Naive thymus-derived CD4-positive, alpha-beta T cell (primary cell): ENCODE measurements at regions of chr17 and their contacts with region 1.

Region 1: GRCh38 chr17:64145757-64146417 is 15.9 kb upstream of the ERN1 start:
- DNase-seq: peak; percentile 85 to 99 (median 96)
- ATAC-seq: peak; percentile 98
- H3K4me3 ChIP-seq: peak overlapping the region; percentile 72
- H3K4me3 Mint-ChIP-seq: no peak overlapping the region
- H3K27ac ChIP-seq: peak overlapping the region; percentile 91
- H3K27ac Mint-ChIP-seq: no peak overlapping the region
- H3K4me1 ChIP-seq: peaks cover 11 to 12% of the 10 kb centered on the region in 2 donors
- H3K4me1 Mint-ChIP-seq: peaks cover 11 to 34% (median 27%) of the 10 kb centered on the region in 7 donors
- H3K27me3 ChIP-seq: no peaks in the 10 kb centered on the region
- H3K27me3 Mint-ChIP-seq: no peaks in the 10 kb centered on the region

Region 2: GRCh38 chr17:63842540-63843386 is 303.1 kb before region 1 on chr17 and contains the start of gene SMARCD2:
- CTCF ChIA-PET with region 1: no interaction called
- POLR2A ChIA-PET with region 1: interaction called, 11 read pairs
- intact Hi-C with region 1: loop called (anchors 1 to 2 kb)
- DNase-seq: peak; percentile 94 to 99 (median 98)
- ATAC-seq: peak; percentile 96
- H3K4me3 ChIP-seq: peak within 1 kb of the TSS; percentile 87
- H3K4me3 Mint-ChIP-seq: peak within 1 kb of the TSS; percentile 92 to 98 (median 95)
- H3K27ac ChIP-seq: peak within 1 kb of the TSS; percentile 96
- H3K27ac Mint-ChIP-seq: peak within 1 kb of the TSS; percentile 87 to 95 (median 92)
- H3K4me1 ChIP-seq: peaks cover 34 to 36% of the 10 kb centered on the region in 2 donors
- H3K4me1 Mint-ChIP-seq: peaks cover 27 to 52% (median 44%) of the 10 kb centered on the region in 7 donors
- H3K27me3 ChIP-seq: no peaks in the 10 kb centered on the region
- H3K27me3 Mint-ChIP-seq: no peaks in the 10 kb centered on the region
- total RNA-seq, gene SMARCD2: 102 to 148 (median 109) TPM

Region 3: DNA sequence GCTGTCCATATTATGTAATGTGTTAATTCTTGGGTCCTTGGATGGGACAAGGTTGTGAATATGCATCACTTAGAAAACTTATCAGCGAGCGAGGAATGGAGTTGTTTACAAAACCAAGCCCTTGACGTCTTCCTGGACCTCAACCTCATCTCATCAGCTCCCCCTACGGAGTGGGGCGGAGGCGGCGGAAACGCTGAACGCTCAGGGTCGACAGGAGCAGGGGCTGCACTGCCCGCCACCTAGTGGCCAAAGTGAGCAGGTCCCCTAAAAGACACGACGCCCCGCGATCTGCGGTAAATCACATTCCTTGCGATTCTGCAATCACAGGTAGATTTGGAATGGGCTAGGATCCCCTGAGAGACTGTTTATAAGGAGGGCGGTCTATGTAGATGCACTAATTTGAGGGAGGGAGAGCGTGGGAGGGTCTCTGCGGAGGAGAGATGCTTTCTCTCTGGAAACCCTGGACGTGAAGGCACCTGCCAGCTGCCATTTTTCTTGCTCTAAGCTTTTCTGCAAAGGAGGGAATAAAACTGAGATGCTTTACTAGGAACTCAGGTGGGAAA is 120.1 kb before region 1 on chr17:
- CTCF ChIA-PET with region 1: interaction called, 6 read pairs
- POLR2A ChIA-PET with region 1: interaction called, 84 read pairs
- intact Hi-C with region 1: no loop called
- DNase-seq: peak; percentile 76 to 98 (median 95)
- ATAC-seq: peak; percentile 95
- H3K4me3 ChIP-seq: peak overlapping the region; percentile 64
- H3K4me3 Mint-ChIP-seq: peak overlapping the region; percentile 74 to 93 (median 83)
- H3K27ac ChIP-seq: peak overlapping the region; percentile 79
- H3K27ac Mint-ChIP-seq: peak overlapping the region; percentile 87 to 100 (median 96)
- H3K4me1 ChIP-seq: peaks cover 49 to 51% of the 10 kb centered on the region in 2 donors
- H3K4me1 Mint-ChIP-seq: peaks cover 37 to 73% (median 68%) of the 10 kb centered on the region in 7 donors
- H3K27me3 ChIP-seq: no peaks in the 10 kb centered on the region
- H3K27me3 Mint-ChIP-seq: no peaks in the 10 kb centered on the region

Region 4: GRCh38 chr17:64081802-64082799 is 63.8 kb before region 1 on chr17:
- CTCF ChIA-PET with region 1: no interaction called
- POLR2A ChIA-PET with region 1: interaction called, 10 read pairs
- intact Hi-C with region 1: no loop called
- DNase-seq: peak in 5 of 9 donors; percentile 21 to 36 (median 30)
- ATAC-seq: peak; percentile 81
- H3K4me3 ChIP-seq: peak overlapping the region; percentile 4
- H3K4me3 Mint-ChIP-seq: peak overlapping the region in 8 of 10 donors; percentile 49 to 84 (median 72)
- H3K27ac ChIP-seq: peak overlapping the region; percentile 37
- H3K27ac Mint-ChIP-seq: peak overlapping the region in 6 of 9 donors; percentile 52 to 91 (median 74)
- H3K4me1 ChIP-seq: peaks cover 49 to 75% of the 10 kb centered on the region in 2 donors
- H3K4me1 Mint-ChIP-seq: peaks cover 7 to 25% (median 11%) of the 10 kb centered on the region in 7 donors
- H3K27me3 ChIP-seq: no peaks in the 10 kb centered on the region
- H3K27me3 Mint-ChIP-seq: no peaks in the 10 kb centered on the region

Region 5: GRCh38 chr17:64216338-64217248 is 70.7 kb after region 1 on chr17:
- CTCF ChIA-PET with region 1: no interaction called
- POLR2A ChIA-PET with region 1: interaction called, 13 read pairs
- intact Hi-C with region 1: loop called in 1 of 2 experiments (anchors 1 kb)
- DNase-seq: no peak
- ATAC-seq: no peak
- H3K4me3 ChIP-seq: no peak overlapping the region
- H3K4me3 Mint-ChIP-seq: peak overlapping the region in 1 of 10 donors; percentile 36
- H3K27ac ChIP-seq: no peak overlapping the region
- H3K27ac Mint-ChIP-seq: peak overlapping the region in 7 of 9 donors; percentile 44 to 88 (median 77)
- H3K4me1 ChIP-seq: peaks cover 0 to 7% of the 10 kb centered on the region in 2 donors
- H3K4me1 Mint-ChIP-seq: peaks cover 9 to 47% (median 40%) of the 10 kb centered on the region in 7 donors
- H3K27me3 ChIP-seq: no peaks in the 10 kb centered on the region
- H3K27me3 Mint-ChIP-seq: no peaks in the 10 kb centered on the region

Region 6: DNA sequence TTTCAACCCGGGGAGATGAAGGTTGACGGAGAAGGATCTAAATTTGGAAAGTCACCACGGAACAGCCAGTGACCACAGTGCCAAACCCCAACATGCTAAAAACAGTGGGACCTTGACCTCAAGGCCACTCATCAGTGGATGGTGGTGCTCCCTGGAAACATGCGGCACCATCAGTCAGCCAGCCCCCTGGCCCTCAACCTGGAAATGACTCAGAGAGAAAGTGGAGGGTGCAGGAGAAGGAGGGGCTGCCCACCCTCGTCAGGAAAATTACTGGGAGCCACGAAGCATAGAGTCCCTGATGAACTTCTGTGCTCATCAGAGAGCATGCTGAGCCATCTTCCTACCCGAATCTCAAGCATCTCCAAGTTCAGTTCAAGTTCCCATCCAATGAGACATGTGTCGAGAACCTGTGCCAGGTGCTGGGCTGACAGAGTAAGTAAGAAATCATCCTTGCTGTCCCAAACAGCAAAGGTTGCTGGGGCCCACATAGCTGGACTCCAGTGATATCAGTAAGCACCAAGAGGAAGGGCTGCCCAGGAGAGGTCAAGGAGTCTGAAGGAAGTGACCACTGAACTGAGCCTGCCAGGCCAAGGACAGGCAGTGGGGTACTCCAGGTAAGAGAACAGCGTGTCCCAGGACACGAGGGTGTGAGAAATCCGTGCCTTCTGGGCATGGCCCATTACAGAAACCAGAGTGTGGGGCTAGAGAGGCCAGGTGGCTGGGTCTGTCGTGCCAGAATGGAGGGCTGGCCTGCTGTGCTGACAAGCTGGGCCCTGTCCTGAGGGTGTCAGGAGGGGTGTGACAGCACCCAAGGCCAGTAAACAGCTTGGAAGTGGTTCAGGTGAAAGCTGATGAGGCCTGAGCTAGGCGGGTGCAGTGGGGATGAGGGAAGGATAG is 239.5 kb after region 1 on chr17:
- CTCF ChIA-PET with region 1: no interaction called
- POLR2A ChIA-PET with region 1: no interaction called
- intact Hi-C with region 1: no loop called
- DNase-seq: peak in 1 of 9 donors; percentile 60
- ATAC-seq: peak; percentile 77
- H3K4me3 ChIP-seq: no peak overlapping the region
- H3K4me3 Mint-ChIP-seq: peak overlapping the region in 7 of 10 donors; percentile 9 to 66 (median 35)
- H3K27ac ChIP-seq: no peak overlapping the region
- H3K27ac Mint-ChIP-seq: peak overlapping the region in 8 of 9 donors; percentile 38 to 94 (median 73)
- H3K4me1 ChIP-seq: peaks cover 11 to 17% of the 10 kb centered on the region in 2 donors
- H3K4me1 Mint-ChIP-seq: peaks cover 30 to 91% (median 55%) of the 10 kb centered on the region in 7 donors
- H3K27me3 ChIP-seq: no peaks in the 10 kb centered on the region
- H3K27me3 Mint-ChIP-seq: peaks cover 0 to 10% (median 0%) of the 10 kb centered on the region in 5 donors

Region 7: DNA sequence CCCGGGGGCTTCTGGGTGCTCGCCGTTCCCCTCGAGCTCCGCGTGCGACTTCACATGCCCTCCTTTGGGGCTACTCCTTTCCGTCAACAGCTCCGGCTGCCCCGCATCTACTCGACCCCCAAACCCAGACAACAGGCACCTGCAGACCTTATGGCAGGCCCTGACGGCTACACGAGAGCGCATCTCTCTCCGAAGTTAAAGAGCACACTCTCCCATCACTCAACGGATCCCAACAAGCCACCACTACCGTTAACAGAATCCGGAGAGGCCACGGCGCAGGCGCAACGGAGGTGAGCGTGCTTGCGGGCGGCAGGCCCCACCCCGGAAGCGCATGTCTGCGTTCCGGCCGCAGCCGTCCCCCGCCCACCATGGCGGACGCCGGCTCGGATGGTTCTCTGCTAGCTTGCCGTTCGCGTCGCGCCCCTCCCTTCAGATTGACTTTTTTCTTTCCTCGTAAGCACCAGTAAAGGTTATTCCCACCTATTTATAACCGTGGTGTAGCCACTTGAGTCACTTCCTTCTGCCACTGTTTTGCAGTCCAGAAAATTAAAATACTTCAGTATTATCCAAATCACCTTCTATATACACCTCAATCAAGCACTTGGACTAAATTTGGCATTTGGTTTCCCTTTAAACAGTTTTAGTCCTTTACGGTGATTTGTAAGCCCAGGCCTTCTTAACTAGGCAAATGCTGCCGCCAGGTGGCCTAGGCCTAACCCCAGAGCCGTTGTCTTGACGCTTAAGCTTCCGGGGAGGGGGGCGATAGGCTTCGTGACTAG is 351.1 kb after region 1 on chr17 and contains the start of gene POLG2:
- CTCF ChIA-PET with region 1: no interaction called
- POLR2A ChIA-PET with region 1: interaction called, 13 read pairs
- intact Hi-C with region 1: loop called (anchors 2 kb)
- DNase-seq: peak; percentile 93 to 96 (median 95)
- ATAC-seq: peak; percentile 89
- H3K4me3 ChIP-seq: peak within 1 kb of the TSS; percentile 69
- H3K4me3 Mint-ChIP-seq: peak within 1 kb of the TSS; percentile 96 to 100 (median 99)
- H3K27ac ChIP-seq: peak within 1 kb of the TSS; percentile 83
- H3K27ac Mint-ChIP-seq: peak within 1 kb of the TSS; percentile 91 to 100 (median 97)
- H3K4me1 ChIP-seq: peaks cover 23 to 31% of the 10 kb centered on the region in 2 donors
- H3K4me1 Mint-ChIP-seq: peaks cover 44 to 88% (median 76%) of the 10 kb centered on the region in 7 donors
- H3K27me3 ChIP-seq: no peaks in the 10 kb centered on the region
- H3K27me3 Mint-ChIP-seq: no peaks in the 10 kb centered on the region
- total RNA-seq, gene POLG2: 34.5 to 69.6 (median 41.9) TPM